Cardiac septum (tissue), 1 donor: ENCODE measurements at regions of chr17 and their contacts with region 1.

Region 1: DNA sequence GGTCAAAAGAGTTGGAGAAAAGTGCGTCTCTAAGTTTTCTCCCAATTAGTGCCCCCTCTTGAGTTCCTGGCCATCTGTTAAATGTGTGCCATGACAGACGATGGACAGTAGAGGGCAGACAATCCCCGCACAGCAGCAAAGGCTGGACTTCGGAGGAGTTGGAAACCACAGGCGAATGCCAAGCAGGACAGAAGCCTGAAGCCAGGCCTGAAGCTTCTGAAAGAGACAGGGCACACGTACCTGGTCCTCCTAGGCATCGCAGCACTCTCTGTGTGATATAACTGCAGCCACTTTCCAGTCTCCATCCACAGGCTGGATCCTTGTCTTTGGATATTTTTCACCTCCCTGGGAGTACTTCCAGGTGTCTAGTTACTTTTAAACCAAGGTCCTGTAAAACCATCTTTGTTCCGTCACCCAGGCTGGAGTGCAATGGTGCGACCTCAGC is 14.5 kb downstream of the C17orf100 start:
- DNase-seq: peak; percentile 86

Region 2: DNA sequence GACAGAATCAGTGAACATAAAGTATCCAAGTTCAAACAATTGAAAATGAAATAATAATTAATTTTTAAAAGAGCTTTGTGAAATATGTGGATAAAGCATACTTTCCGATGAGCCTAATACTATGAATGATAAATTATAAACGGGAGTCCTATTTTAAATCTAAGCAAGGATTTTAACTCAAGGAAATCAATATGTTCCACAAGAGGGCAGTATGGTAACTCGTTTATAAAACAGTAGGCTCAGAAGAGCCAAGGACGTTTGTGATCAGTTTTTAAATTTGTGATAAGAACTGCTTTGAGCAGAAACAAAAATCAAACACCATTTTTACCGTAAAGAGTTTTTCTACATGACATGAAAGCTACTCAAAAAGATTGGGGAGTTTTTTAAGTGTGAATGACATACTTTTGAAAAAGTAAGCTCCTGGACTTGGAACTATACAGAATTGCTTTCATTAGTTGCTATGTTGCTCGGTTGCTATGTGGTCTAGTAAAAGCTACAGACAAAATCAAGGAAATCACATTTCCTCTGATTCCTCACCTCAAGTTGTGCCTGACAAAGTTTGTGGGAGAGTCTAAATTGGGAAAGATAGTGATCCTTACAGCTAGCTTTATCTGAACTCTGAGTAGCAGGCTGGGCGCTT is 177.3 kb after region 1 on chr17:
- intact Hi-C with region 1: loop called (anchors 5 kb)
- DNase-seq: no peak

Region 3: GRCh38 chr17:6894206-6894528 is 228.1 kb after region 1 on chr17:
- intact Hi-C with region 1: loop called (anchors 10 kb)
- DNase-seq: no peak

Region 4: DNA sequence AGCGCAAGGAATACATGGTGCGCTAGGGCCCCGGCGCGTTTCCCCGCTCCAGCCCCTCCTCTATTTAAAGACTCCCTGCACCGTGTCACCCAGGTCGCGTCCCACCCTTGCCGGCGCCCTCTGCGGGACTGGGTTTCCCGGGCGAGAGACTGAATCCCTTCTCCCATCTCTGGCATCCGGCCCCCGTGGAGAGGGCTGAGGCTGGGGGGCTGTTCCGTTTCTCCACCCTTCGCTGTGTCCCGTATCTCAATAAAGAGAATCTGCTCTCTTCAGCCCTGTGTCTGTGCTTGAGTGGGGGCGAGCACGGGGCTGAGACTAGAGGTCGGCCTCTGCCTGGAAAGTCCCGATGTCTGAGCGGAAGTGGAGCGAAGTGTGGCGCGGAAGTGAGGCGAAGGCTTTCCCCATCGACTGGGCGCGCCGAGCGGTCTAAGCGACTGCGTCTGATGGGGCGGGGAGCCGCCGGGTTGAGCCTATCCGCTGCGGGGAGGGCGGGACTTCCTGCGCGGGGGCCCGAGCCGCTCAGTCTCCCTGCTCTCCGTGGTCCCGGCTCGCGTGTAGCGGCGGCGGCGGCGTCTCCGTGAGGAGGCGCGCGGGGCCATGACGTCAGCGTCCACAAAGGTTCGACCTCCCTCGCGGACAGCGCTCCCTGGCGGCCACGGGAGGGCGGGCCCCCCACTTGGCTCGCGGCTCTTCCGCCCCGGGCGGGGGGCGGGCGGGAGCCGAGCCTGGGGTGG is 348.3 kb after region 1 on chr17:
- intact Hi-C with region 1: loop called (anchors 5 kb)
- DNase-seq: peak; percentile 99